Heart left ventricle (tissue), 16 donors: ENCODE measurements at regions of chr6 and their contacts with region 1.

Region 1: GRCh38 chr6:105985816-105986632 is 100.1 kb upstream of the PRDM1 start:
- DNase-seq: peak in 4 of 5 donors; percentile 24 to 68 (median 32)
- ATAC-seq: peak in 2 of 4 donors; percentile 33 to 58
- H3K4me3 ChIP-seq: peak overlapping the region in 7 of 12 donors; percentile 12 to 43 (median 19)
- H3K27ac ChIP-seq: no peak overlapping the region
- H3K4me1 ChIP-seq: peaks cover 0 to 21% (median 11%) of the 10 kb centered on the region in 12 donors
- H3K27me3 ChIP-seq: peaks cover 14 to 98% (median 77%) of the 10 kb centered on the region in 9 donors
- CTCF ChIP-seq: no peak
- POLR2A ChIP-seq: no peak

Region 2: GRCh38 chr6:105917038-105917695 is 68.9 kb before region 1 on chr6:
- intact Hi-C with region 1: loop called in 1 of 10 experiments (anchors 5 kb)
- DNase-seq: no peak
- ATAC-seq: peak in 3 of 4 donors; percentile 43 to 71 (median 60)
- H3K4me3 ChIP-seq: peak overlapping the region in 3 of 12 donors; percentile 7 to 23 (median 22)
- H3K27ac ChIP-seq: peak overlapping the region in 10 of 12 donors; percentile 6 to 64 (median 30)
- H3K4me1 ChIP-seq: peaks cover 0 to 17% (median 2%) of the 10 kb centered on the region in 12 donors
- H3K27me3 ChIP-seq: no peaks in the 10 kb centered on the region
- CTCF ChIP-seq: no peak
- POLR2A ChIP-seq: no peak

Region 3: GRCh38 chr6:105964979-105965760 is 20.9 kb before region 1 on chr6:
- intact Hi-C with region 1: loop called in 1 of 10 experiments (anchors 1 kb)
- DNase-seq: no peak
- ATAC-seq: no peak
- H3K4me3 ChIP-seq: no peak overlapping the region
- H3K27ac ChIP-seq: no peak overlapping the region
- H3K4me1 ChIP-seq: no peaks in the 10 kb centered on the region
- H3K27me3 ChIP-seq: no peaks in the 10 kb centered on the region
- CTCF ChIP-seq: no peak
- POLR2A ChIP-seq: no peak